ENCODE measurements at regions of chr6 and their contacts with region 1.

Region 1: DNA sequence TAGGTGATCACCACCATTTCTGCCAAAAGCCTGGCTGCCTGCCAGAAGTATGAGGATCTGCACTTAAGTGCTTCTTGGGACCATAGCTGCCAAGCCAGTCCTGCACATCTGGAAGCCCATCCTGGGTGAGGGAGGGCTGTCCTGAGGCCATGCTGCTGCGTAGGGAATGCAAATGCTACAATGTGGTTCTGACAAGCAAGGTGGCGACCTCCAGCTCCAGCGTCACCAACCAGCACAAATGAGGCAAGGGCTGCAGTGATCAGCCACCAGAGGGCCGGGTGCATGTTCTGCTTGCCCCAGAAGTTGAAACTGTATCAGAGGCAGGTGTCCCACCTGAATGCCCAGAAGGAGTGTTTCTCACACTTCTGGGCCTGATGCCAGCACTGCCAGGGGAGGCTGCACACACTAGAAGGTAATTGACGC is 99.1 kb upstream of the KCNQ5 start:
- DNase-seq: peak in 8 of 9 donors; percentile 7 to 54 (median 22)
- ATAC-seq: no peak
- H3K4me3 ChIP-seq: no peak overlapping the region
- H3K4me3 Mint-ChIP-seq: no peak overlapping the region
- H3K27ac ChIP-seq: no peak overlapping the region
- H3K27ac Mint-ChIP-seq: no peak overlapping the region
- H3K4me1 ChIP-seq: no peaks in the 10 kb centered on the region
- H3K4me1 Mint-ChIP-seq: no peaks in the 10 kb centered on the region
- H3K27me3 ChIP-seq: peaks cover 0 to 3% of the 10 kb centered on the region in 2 donors
- H3K27me3 Mint-ChIP-seq: peaks cover 0 to 13% (median 4%) of the 10 kb centered on the region in 5 donors

Region 2: GRCh38 chr6:73129653-73130443 is 607.1 kb after region 1 on chr6:
- CTCF ChIA-PET with region 1: interaction called, 6 read pairs
- POLR2A ChIA-PET with region 1: interaction called, 3 read pairs
- intact Hi-C with region 1: loop called (anchors 1 kb)
- DNase-seq: peak; percentile 52 to 85 (median 77)
- ATAC-seq: peak; percentile 93
- H3K4me3 ChIP-seq: no peak overlapping the region
- H3K4me3 Mint-ChIP-seq: peak overlapping the region in 8 of 10 donors; percentile 23 to 71 (median 52)
- H3K27ac ChIP-seq: no peak overlapping the region
- H3K27ac Mint-ChIP-seq: peak overlapping the region in 1 of 9 donors; percentile 48
- H3K4me1 ChIP-seq: no peaks in the 10 kb centered on the region
- H3K4me1 Mint-ChIP-seq: peaks cover 0 to 6% (median 3%) of the 10 kb centered on the region in 7 donors
- H3K27me3 ChIP-seq: no peaks in the 10 kb centered on the region
- H3K27me3 Mint-ChIP-seq: peaks cover 0 to 4% (median 0%) of the 10 kb centered on the region in 5 donors

Region 3: DNA sequence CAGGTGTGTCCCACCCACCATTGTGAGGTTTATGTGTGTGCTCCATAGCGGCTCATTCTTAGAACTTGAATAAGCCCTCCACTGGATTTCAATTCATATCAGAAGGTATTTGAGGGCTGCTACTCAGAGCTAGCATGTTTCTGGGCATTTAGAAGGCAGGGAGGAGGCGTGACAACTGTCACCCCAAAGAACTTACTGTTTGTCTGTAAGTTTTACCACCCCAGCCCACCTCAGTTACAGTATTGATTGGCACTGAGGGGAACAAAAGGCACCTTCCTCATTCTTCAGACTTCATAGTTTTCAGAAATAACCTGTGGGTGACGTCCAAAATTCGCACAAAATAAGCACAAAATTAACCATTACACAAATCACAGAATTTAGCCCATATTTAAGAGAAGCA is 620.8 kb after region 1 on chr6:
- CTCF ChIA-PET with region 1: no interaction called
- POLR2A ChIA-PET with region 1: no interaction called
- intact Hi-C with region 1: no loop called
- DNase-seq: no peak
- ATAC-seq: no peak
- H3K4me3 ChIP-seq: no peak overlapping the region
- H3K4me3 Mint-ChIP-seq: no peak overlapping the region
- H3K27ac ChIP-seq: no peak overlapping the region
- H3K27ac Mint-ChIP-seq: no peak overlapping the region
- H3K4me1 ChIP-seq: no peaks in the 10 kb centered on the region
- H3K4me1 Mint-ChIP-seq: no peaks in the 10 kb centered on the region
- H3K27me3 ChIP-seq: no peaks in the 10 kb centered on the region
- H3K27me3 Mint-ChIP-seq: no peaks in the 10 kb centered on the region

Region 4: DNA sequence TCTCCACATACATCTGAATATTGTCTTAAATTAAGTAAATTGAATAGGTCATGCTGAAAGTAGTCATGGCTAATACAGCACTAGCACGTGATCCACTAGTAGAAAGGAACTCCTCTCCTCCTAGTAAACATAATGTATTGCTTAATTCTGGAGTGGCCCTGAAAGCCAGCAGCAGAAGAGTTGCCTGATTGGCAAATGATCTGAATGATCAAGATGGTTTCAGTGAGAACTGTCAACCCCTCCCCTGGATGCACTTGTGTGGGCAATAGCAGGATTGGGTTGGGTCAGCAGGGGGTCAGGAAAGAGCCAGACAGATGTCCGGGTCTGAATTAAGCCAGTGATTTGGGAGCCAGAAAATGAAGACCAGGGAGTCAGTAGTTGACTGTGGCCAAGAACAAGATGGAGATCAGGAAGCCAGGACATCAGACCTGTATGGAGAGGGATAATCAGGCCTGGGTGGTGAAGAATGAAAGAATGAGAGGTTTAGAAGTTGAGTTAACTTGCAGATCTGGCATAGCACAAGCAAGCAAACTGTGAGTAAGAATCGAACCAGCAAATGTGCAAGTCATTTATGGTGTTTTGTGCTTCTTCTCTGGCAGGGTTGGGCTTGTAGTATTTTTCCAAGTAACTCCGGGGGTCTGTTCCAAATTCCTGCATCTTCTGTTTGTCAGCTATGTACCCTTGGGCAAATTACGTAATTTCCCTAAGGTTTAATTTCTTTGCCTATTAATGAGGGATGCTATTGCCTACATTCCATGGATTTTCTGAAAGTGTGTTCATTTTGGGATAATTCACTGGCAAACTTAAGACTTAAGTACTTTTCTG is 1478.1 kb after region 1 on chr6:
- CTCF ChIA-PET with region 1: no interaction called
- POLR2A ChIA-PET with region 1: no interaction called
- intact Hi-C with region 1: no loop called
- DNase-seq: no peak
- ATAC-seq: no peak
- H3K4me3 ChIP-seq: no peak overlapping the region
- H3K4me3 Mint-ChIP-seq: no peak overlapping the region
- H3K27ac ChIP-seq: no peak overlapping the region
- H3K27ac Mint-ChIP-seq: no peak overlapping the region
- H3K4me1 ChIP-seq: no peaks in the 10 kb centered on the region
- H3K4me1 Mint-ChIP-seq: no peaks in the 10 kb centered on the region
- H3K27me3 ChIP-seq: no peaks in the 10 kb centered on the region
- H3K27me3 Mint-ChIP-seq: peaks cover 0 to 5% (median 0%) of the 10 kb centered on the region in 5 donors